ENCODE measurements at regions of chr12 and their contacts with region 1.

Region 1: DNA sequence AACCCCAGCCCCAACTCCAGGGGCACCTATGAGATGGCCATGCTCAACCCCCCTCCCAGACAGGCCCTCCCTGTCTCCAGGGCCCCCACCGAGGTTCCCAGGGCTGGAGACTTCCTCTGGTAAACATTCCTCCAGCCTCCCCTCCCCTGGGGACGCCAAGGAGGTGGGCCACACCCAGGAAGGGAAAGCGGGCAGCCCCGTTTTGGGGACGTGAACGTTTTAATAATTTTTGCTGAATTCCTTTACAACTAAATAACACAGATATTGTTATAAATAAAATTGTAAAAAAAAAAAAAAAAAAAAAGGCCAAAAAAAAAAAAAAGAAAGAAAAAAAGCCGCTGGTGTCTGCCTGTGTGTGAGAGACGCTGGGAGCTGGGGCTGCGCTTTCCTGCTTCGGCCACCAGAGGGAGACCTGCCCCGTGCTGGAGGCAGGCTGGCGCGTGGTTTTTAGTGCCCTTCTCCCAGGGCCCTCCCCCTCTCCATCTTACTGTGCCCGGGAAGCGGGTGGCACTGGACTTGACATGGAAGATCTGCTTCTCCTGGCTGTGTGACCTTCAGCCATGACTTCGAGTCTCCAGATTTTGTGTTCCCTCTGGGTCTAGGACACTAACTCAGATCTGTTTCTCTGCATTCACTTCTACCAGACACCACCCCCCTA is 3.4 kb upstream of the NXPH4 start:
- DNase-seq: no peak
- H3K4me3 ChIP-seq: no peak overlapping the region
- CTCF ChIP-seq: peak; percentile 89

Region 2: DNA sequence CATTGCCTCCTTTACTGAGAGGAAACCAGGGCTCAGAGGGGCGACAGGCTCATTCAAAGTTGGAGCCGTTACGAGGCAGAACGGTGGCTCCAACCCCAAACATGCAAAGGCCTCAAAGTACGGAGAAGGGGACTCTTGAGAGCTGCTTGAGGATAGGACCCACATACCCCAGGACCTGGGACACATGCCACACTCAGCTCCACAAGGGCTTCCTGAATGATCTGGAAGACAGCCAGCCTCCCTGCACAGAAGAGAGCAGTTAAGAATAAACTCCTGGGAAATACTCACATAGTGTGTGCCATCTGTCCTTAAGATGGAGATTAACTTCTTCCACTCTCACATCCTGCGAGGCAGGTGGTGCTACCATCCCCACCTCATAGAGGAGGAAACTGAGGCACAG is 23.1 kb before region 1 on chr12:
- CTCF ChIA-PET with region 1: interaction called, 20 read pairs
- POLR2A ChIA-PET with region 1: interaction called, 4 read pairs
- DNase-seq: no peak
- H3K4me3 ChIP-seq: no peak overlapping the region
- CTCF ChIP-seq: no peak

Region 3: DNA sequence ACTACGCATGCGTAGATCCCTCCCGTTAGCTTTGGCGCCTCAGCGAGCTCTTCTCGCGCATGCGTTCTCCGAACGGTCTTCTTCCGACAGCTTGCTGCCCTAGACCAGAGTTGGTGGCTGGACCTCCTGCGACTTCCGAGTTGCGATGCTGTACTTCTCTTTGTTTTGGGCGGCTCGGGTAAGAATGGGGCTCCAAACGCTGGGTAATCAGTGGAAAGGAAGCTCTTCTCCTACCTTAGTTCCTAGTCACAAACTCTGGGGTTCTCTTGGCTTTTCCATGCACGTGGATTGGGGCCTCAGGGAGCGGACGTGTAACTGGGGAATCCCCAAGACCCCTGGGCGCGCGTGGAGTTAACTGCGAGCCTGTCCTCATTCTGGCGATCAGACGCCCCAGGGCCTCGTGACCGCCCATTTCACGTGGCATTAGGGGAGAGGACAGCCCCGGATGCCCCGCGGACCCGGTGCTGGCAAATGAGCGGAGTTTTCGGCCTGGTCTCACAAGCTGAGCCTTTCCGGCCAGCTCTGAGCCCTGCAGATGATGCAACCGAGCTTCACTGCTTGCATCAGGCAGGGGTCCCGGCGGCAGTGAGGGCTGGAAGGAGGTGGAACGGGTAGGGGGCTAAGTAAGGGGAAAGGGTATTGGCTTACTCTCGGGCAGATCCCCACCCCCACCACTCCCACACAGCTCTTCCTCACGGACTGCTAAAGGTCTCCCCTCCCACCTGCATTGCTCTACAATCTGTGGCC is 16.6 kb after region 1 on chr12 and contains the start of gene SHMT2:
- CTCF ChIA-PET with region 1: interaction called, 290 read pairs
- POLR2A ChIA-PET with region 1: interaction called, 10 read pairs
- DNase-seq: peak; percentile 78
- H3K4me3 ChIP-seq: peak within 1 kb of the TSS; percentile 93
- CTCF ChIP-seq: no peak

Region 4: GRCh38 chr12:57248934-57249742 is 36.0 kb after region 1 on chr12:
- CTCF ChIA-PET with region 1: interaction called, 393 read pairs
- POLR2A ChIA-PET with region 1: interaction called, 3 read pairs
- DNase-seq: no peak
- H3K4me3 ChIP-seq: no peak overlapping the region
- CTCF ChIP-seq: no peak

Region 5: GRCh38 chr12:57280211-57281062 is 67.2 kb after region 1 on chr12:
- CTCF ChIA-PET with region 1: interaction called, 10 read pairs
- POLR2A ChIA-PET with region 1: interaction called, 3 read pairs
- DNase-seq: peak; percentile 79
- H3K4me3 ChIP-seq: no peak overlapping the region
- CTCF ChIP-seq: no peak